ENCODE measurements at regions of chr3 and their contacts with region 1.

Region 1: GRCh38 chr3:131735116-131735515 is 232.3 kb upstream of the MRPL3 start:
- DNase-seq: no peak
- ATAC-seq: no peak
- H3K4me3 ChIP-seq: no peak overlapping the region
- H3K27ac ChIP-seq: no peak overlapping the region
- H3K4me1 ChIP-seq: peaks cover 0 to 3% (median 0%) of the 10 kb centered on the region in 9 donors
- H3K27me3 ChIP-seq: no peaks in the 10 kb centered on the region
- CTCF ChIP-seq: no peak

Region 2: DNA sequence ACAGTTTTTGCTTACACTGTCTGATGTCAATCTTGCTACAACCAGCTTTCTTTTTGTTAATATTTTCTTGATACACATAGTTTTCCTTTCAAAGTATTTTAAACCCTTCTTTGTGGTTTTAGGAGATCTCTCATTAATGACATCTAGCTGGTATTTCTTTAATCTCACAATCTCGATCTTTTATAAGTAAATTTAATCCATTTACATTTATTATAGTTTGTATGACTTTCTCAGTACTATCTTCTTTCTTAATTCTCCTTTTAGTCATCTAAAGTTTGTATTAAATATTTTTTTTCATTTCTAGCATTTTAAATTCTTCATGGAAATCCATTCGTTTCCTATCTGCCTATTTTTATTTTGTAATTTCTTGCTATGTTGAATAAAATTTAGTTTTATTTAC is 287.8 kb before region 1 on chr3:
- intact Hi-C with region 1: loop called in 1 of 10 experiments (anchors 5 kb)
- DNase-seq: no peak
- ATAC-seq: no peak
- H3K4me3 ChIP-seq: no peak overlapping the region
- H3K27ac ChIP-seq: no peak overlapping the region
- H3K4me1 ChIP-seq: peaks cover 0 to 26% (median 7%) of the 10 kb centered on the region in 9 donors
- H3K27me3 ChIP-seq: no peaks in the 10 kb centered on the region
- CTCF ChIP-seq: no peak

Region 3: GRCh38 chr3:131762981-131763564 is 28.0 kb after region 1 on chr3:
- intact Hi-C with region 1: loop called in 1 of 10 experiments (anchors 2 kb)
- DNase-seq: no peak
- ATAC-seq: no peak
- H3K4me3 ChIP-seq: no peak overlapping the region
- H3K27ac ChIP-seq: no peak overlapping the region
- H3K4me1 ChIP-seq: no peaks in the 10 kb centered on the region
- H3K27me3 ChIP-seq: no peaks in the 10 kb centered on the region
- CTCF ChIP-seq: no peak